Activated CD4-positive, alpha-beta memory T cell treated with anti-CD3 and anti-CD28 coated beads for 36 hours (primary cell): ENCODE measurements at regions of chr5 and their contacts with region 1.

Region 1: DNA sequence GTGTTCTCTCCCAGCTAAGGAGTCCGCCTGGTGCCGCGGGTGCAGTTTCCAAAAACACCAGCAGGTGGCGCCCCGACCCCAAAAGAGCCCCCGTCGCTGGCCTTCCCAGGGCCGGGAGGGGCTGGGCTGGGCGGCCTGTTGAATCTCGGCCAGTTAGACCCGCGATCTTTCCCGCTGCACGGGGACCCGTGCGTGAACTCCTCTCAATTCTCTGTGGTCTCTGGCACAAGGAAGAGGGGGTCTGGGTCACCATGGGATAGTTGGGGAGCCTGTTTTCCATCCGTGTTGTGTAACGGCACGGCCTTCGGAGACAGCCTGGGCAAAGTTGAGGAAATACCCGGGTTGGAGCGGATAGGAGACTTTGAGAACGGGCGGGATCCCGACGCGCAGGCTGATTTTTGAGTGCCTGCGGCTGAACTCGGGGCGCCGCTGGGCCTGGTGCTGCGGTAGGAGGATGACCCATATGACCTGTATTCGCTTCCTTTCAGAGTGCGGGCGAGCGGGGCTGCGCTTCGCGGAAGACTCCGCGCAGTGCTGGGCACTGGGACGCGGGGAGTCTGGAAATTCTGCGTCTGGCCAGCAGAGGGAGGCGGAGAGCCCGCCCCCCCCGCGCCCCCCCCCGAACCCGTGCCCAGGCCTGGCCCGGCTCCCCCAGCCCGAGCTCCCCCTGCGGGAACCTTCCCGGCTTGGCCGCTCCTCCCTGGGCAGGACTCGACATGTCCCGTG is 7.9 kb upstream of the PSD2 start:
- DNase-seq: peak; percentile 90
- H3K4me3 Mint-ChIP-seq: peak overlapping the region; percentile 78
- H3K27ac Mint-ChIP-seq: no peak overlapping the region
- H3K4me1 Mint-ChIP-seq: peaks cover 4% of the 10 kb centered on the region
- H3K27me3 Mint-ChIP-seq: peaks cover 14% of the 10 kb centered on the region

Region 2: GRCh38 chr5:139670369-139671095 is 117.2 kb before region 1 on chr5:
- CTCF ChIA-PET with region 1: interaction called, 11 read pairs
- POLR2A ChIA-PET with region 1: no interaction called
- intact Hi-C with region 1: no loop called
- DNase-seq: peak; percentile 36
- H3K4me3 Mint-ChIP-seq: peak overlapping the region; percentile 1
- H3K27ac Mint-ChIP-seq: no peak overlapping the region
- H3K4me1 Mint-ChIP-seq: peaks cover 22% of the 10 kb centered on the region
- H3K27me3 Mint-ChIP-seq: no peaks in the 10 kb centered on the region

Region 3: GRCh38 chr5:139774980-139775661 is 12.6 kb before region 1 on chr5:
- CTCF ChIA-PET with region 1: interaction called, 82 read pairs
- POLR2A ChIA-PET with region 1: interaction called, 3 read pairs
- intact Hi-C with region 1: no loop called
- DNase-seq: peak; percentile 88
- H3K4me3 Mint-ChIP-seq: no peak overlapping the region
- H3K27ac Mint-ChIP-seq: no peak overlapping the region
- H3K4me1 Mint-ChIP-seq: peaks cover 9% of the 10 kb centered on the region
- H3K27me3 Mint-ChIP-seq: peaks cover 5% of the 10 kb centered on the region

Region 4: GRCh38 chr5:139844472-139845145 is 56.9 kb after region 1 on chr5:
- CTCF ChIA-PET with region 1: interaction called, 68 read pairs
- POLR2A ChIA-PET with region 1: interaction called, 4 read pairs
- intact Hi-C with region 1: loop called (anchors 1 kb)
- DNase-seq: peak; percentile 82
- H3K4me3 Mint-ChIP-seq: peak overlapping the region; percentile 2
- H3K27ac Mint-ChIP-seq: peak overlapping the region; percentile 8
- H3K4me1 Mint-ChIP-seq: peaks cover 8% of the 10 kb centered on the region
- H3K27me3 Mint-ChIP-seq: peaks cover 22% of the 10 kb centered on the region

Region 5: DNA sequence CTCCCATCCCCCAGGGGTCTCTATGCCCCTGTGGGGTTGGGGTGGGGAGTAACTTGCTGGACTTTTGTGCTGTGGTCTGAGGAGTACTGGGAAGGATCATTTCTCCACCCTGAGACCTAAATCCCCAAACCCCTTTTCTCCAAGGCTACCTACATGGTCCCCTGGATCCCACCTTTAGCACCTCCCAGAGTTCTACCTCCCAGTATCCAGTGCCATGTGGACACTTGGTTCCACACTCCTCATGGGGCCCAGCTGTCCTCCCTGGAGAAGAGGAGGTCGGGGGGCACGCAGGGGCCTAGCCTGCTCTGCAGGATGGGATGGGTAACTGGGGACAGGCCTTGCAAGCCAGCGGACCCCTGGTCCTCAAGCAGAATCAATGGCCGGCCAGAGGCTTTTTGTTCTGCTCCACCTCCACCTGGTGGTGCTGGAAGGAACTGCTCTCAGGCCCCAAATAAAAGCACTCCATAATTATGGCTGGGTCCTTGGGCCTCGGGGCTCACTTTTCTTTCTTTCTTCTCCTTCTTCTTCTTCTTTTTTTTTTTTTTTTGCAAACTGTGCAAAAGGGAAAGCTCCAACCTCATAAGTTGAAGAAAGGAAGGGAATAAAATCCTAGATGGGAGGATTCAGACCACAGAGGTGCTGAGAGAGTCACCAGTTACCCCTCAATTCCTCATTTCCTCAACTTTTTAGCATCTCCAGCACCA is 76.3 kb after region 1 on chr5:
- CTCF ChIA-PET with region 1: interaction called, 137 read pairs
- POLR2A ChIA-PET with region 1: no interaction called
- intact Hi-C with region 1: loop called (anchors 1 kb)
- DNase-seq: peak; percentile 66
- H3K4me3 Mint-ChIP-seq: no peak overlapping the region
- H3K27ac Mint-ChIP-seq: no peak overlapping the region
- H3K4me1 Mint-ChIP-seq: no peaks in the 10 kb centered on the region
- H3K27me3 Mint-ChIP-seq: no peaks in the 10 kb centered on the region